Natural killer cell (primary cell): ENCODE measurements at regions of chr3 and their contacts with region 1.

Region 1: GRCh38 chr3:20080956-20081554 is 40.8 kb downstream of the KAT2B start:
- DNase-seq: peak; percentile 57 to 65
- ATAC-seq: peak; percentile 97 to 98 (median 98)
- H3K4me3 ChIP-seq: no peak overlapping the region
- H3K4me3 Mint-ChIP-seq: peak overlapping the region; percentile 57
- H3K27ac ChIP-seq: peak overlapping the region; percentile 60
- H3K27ac Mint-ChIP-seq: peak overlapping the region; percentile 91 to 94
- H3K4me1 ChIP-seq: peaks cover 7% of the 10 kb centered on the region
- H3K4me1 Mint-ChIP-seq: peaks cover 45 to 47% of the 10 kb centered on the region in 2 donors
- H3K27me3 ChIP-seq: no peaks in the 10 kb centered on the region
- H3K27me3 Mint-ChIP-seq: no peaks in the 10 kb centered on the region
- CTCF ChIP-seq: no peak

Region 2: DNA sequence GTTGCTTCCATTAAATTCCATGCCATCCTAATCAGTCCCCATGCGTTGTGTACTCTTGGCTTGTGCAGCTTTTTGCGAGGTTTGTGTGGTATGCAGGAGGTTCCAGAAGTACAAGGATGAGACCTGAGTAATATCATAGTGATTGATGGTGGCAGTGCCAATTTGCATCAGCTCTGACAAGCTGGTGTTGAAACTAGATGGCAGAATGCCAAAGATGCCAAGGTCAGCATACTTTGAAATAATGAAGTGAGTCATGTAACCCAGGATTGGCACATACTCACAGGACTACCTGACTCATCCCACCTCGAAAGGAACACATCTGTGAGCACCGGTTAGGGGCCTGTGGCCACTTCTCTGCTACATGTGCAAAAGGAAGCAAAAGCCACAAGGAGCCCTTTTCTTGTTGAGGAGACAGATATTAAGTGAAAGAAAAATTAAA is 26.5 kb before region 1 on chr3:
- intact Hi-C with region 1: loop called (anchors 2 kb)
- DNase-seq: peak; percentile 61 to 83
- ATAC-seq: peak; percentile 84 to 95 (median 88)
- H3K4me3 ChIP-seq: no peak overlapping the region
- H3K4me3 Mint-ChIP-seq: no peak overlapping the region
- H3K27ac ChIP-seq: peak overlapping the region; percentile 83
- H3K27ac Mint-ChIP-seq: no peak overlapping the region
- H3K4me1 ChIP-seq: peaks cover 48% of the 10 kb centered on the region
- H3K4me1 Mint-ChIP-seq: peaks cover 39 to 44% of the 10 kb centered on the region in 2 donors
- H3K27me3 ChIP-seq: no peaks in the 10 kb centered on the region
- H3K27me3 Mint-ChIP-seq: no peaks in the 10 kb centered on the region
- CTCF ChIP-seq: no peak

Region 3: DNA sequence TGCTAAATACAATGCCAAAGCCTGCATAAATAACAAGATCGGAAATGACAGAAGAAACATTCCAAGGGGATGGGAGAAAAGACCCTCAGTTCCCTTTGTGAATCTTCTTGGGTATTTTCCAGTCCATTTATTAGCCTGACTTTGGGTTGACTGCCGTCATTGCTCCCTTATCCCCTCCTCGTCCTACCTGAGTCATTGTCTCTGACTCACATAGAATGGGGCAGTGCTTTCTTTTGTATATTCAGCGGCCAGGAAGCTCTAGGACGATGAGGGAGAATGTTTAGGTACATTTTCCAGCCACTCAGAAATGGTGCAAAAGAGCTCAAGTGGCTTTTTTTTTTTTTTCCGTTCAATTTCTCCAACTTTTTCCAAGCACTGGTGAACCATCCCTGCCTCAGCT is 30.8 kb after region 1 on chr3:
- intact Hi-C with region 1: no loop called
- DNase-seq: no peak
- ATAC-seq: no peak
- H3K4me3 ChIP-seq: no peak overlapping the region
- H3K4me3 Mint-ChIP-seq: no peak overlapping the region
- H3K27ac ChIP-seq: no peak overlapping the region
- H3K27ac Mint-ChIP-seq: no peak overlapping the region
- H3K4me1 ChIP-seq: peaks cover 21% of the 10 kb centered on the region
- H3K4me1 Mint-ChIP-seq: peaks cover 30 to 33% of the 10 kb centered on the region in 2 donors
- H3K27me3 ChIP-seq: no peaks in the 10 kb centered on the region
- H3K27me3 Mint-ChIP-seq: no peaks in the 10 kb centered on the region
- CTCF ChIP-seq: no peak